Endothelial cell of umbilical vein (primary cell): ENCODE measurements at regions of chr19 and their contacts with region 1.

Region 1: GRCh38 chr19:38929929-38930775 is at the start of gene SARS2:
- DNase-seq: peak; percentile 95
- H3K4me3 ChIP-seq: peak within 1 kb of the TSS; percentile 50 to 78 (median 58)
- H3K27ac ChIP-seq: peak within 1 kb of the TSS; percentile 69
- H3K4me1 ChIP-seq: peaks cover 14% of the 10 kb centered on the region
- H3K27me3 ChIP-seq: no peaks in the 10 kb centered on the region
- CTCF ChIP-seq: peak; percentile 99 to 100
- POLR2A ChIP-seq: peak; percentile 85
- total RNA-seq, gene SARS2: 38.5 and 40.3 TPM in 2 replicates

Region 2: GRCh38 chr19:38514812-38515633 is 415.1 kb before region 1 on chr19:
- CTCF ChIA-PET with region 1: interaction called, 4 read pairs
- POLR2A ChIA-PET with region 1: no interaction called
- dilution Hi-C with region 1: no loop called
- intact Hi-C with region 1: loop called (anchors 1 kb)
- DNase-seq: peak; percentile 52
- H3K4me3 ChIP-seq: no peak overlapping the region
- H3K27ac ChIP-seq: no peak overlapping the region
- H3K4me1 ChIP-seq: no peaks in the 10 kb centered on the region
- H3K27me3 ChIP-seq: no peaks in the 10 kb centered on the region
- CTCF ChIP-seq: peak; percentile 72 to 95
- POLR2A ChIP-seq: no peak

Region 3: GRCh38 chr19:38544034-38544958 is 385.9 kb before region 1 on chr19:
- CTCF ChIA-PET with region 1: interaction called, 6 read pairs
- POLR2A ChIA-PET with region 1: no interaction called
- dilution Hi-C with region 1: no loop called
- intact Hi-C with region 1: loop called (anchors 1 kb)
- DNase-seq: peak; percentile 78
- H3K4me3 ChIP-seq: no peak overlapping the region
- H3K27ac ChIP-seq: no peak overlapping the region
- H3K4me1 ChIP-seq: peaks cover 7% of the 10 kb centered on the region
- H3K27me3 ChIP-seq: peaks cover 0 to 2% of the 10 kb centered on the region in 2 experiments
- CTCF ChIP-seq: peak; percentile 30 to 37
- POLR2A ChIP-seq: no peak

Region 4: GRCh38 chr19:38729653-38730469 is 200.3 kb before region 1 on chr19:
- CTCF ChIA-PET with region 1: interaction called, 18 read pairs
- POLR2A ChIA-PET with region 1: no interaction called
- dilution Hi-C with region 1: no loop called
- intact Hi-C with region 1: loop called (anchors 1 kb)
- DNase-seq: peak; percentile 57
- H3K4me3 ChIP-seq: no peak overlapping the region
- H3K27ac ChIP-seq: no peak overlapping the region
- H3K4me1 ChIP-seq: peaks cover 15% of the 10 kb centered on the region
- H3K27me3 ChIP-seq: no peaks in the 10 kb centered on the region
- CTCF ChIP-seq: peak; percentile 76 to 91
- POLR2A ChIP-seq: no peak

Region 5: DNA sequence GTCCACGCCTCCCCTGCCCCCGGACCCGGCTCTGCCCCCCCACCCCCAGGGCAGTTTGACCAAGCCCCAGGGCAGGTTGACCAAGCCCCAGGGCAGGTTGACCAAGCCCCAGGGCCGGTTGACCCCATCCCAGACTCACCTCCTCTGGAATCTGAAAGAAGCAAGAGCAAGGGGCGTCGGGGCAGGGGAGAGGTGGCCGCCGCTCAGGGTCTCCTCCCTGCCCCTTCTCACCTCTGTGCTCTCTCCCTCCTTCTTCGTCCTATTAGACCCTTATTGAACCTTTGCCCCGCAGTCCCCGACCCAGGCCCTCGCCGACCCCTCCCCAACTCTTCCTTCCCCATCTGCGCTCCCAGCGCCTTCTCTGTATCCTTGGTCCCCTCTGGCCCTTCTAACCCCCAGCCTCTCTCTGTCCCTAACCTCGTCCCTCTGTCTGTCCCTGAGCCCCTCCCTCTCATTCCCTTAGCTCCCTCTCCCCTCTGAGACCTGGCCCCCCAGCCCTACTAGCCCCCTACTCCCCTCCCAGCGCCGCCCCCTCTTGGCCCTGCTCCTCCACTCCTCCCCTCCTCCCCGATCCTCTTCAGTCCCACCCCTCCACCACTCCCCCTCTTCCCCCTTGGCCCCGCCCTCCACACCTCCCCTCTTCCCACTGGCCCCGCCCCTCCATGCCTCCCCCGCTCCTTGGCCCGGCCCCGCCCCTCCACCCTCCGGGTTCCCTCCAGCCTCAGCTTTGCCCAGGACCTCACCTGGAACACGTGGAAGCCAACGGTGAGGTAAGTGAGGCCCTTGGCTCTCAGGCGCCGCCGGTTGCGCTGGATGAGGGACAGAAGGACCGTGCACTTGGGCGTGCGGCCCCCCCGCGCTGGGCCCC is 193.5 kb before region 1 on chr19:
- CTCF ChIA-PET with region 1: interaction called, 18 read pairs
- POLR2A ChIA-PET with region 1: no interaction called
- dilution Hi-C with region 1: no loop called
- intact Hi-C with region 1: no loop called
- DNase-seq: no peak
- H3K4me3 ChIP-seq: peak overlapping the region in 1 of 3 experiments; percentile 37
- H3K27ac ChIP-seq: no peak overlapping the region
- H3K4me1 ChIP-seq: peaks cover 17% of the 10 kb centered on the region
- H3K27me3 ChIP-seq: no peaks in the 10 kb centered on the region
- CTCF ChIP-seq: no peak
- POLR2A ChIP-seq: no peak

Region 6: DNA sequence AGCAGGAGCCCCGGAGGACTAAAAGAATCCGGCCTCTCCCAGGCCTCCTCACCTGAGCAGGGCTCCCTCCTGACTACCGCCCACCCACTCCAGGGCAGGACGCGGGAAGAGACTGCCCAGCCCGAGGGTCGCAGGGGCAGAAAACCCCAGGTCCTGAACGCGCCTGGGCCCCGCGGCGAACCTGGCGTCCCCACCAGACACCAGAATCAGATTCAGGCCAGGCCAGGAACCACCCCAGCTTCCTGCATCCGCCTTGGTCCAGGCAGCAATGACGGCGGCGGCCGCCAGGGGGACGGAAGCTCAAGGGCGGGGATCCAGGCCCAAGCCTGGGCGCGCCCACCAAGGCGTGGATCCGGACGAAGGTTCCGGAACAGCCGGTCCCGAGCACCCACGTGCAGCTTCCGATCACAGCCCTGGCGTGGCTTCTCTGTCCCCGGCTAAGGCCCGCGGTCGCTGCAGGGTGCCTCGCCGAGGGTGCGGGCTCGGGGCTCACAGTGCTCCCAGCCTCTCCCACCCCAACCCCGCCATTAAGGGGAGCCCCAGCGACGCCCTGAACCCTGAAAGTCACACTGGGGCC is 160.4 kb before region 1 on chr19:
- CTCF ChIA-PET with region 1: interaction called, 10 read pairs
- POLR2A ChIA-PET with region 1: no interaction called
- dilution Hi-C with region 1: no loop called
- intact Hi-C with region 1: no loop called
- DNase-seq: peak; percentile 70
- H3K4me3 ChIP-seq: peak overlapping the region in 1 of 3 experiments; percentile 18
- H3K27ac ChIP-seq: no peak overlapping the region
- H3K4me1 ChIP-seq: peaks cover 4% of the 10 kb centered on the region
- H3K27me3 ChIP-seq: no peaks in the 10 kb centered on the region
- CTCF ChIP-seq: peak; percentile 79 to 84
- POLR2A ChIP-seq: no peak

Region 7: GRCh38 chr19:38899447-38900219 is 30.5 kb before region 1 on chr19 and contains the starts of genes NFKBIB and SIRT2:
- CTCF ChIA-PET with region 1: interaction called, 16 read pairs
- POLR2A ChIA-PET with region 1: no interaction called
- dilution Hi-C with region 1: no loop called
- intact Hi-C with region 1: loop called (anchors 1 kb)
- DNase-seq: peak; percentile 100
- H3K4me3 ChIP-seq: peak within 1 kb of the TSS; percentile 73 to 83 (median 82)
- H3K27ac ChIP-seq: peak within 1 kb of the TSS; percentile 86
- H3K4me1 ChIP-seq: peaks cover 22% of the 10 kb centered on the region
- H3K27me3 ChIP-seq: no peaks in the 10 kb centered on the region
- CTCF ChIP-seq: no peak
- POLR2A ChIP-seq: peak; percentile 43
- total RNA-seq, gene NFKBIB: 24.3 and 25.0 TPM in 2 replicates
- total RNA-seq, gene SIRT2: 46.3 and 47.6 TPM in 2 replicates